ENCODE measurements at regions of chr10 and their contacts with region 1.

Region 1: DNA sequence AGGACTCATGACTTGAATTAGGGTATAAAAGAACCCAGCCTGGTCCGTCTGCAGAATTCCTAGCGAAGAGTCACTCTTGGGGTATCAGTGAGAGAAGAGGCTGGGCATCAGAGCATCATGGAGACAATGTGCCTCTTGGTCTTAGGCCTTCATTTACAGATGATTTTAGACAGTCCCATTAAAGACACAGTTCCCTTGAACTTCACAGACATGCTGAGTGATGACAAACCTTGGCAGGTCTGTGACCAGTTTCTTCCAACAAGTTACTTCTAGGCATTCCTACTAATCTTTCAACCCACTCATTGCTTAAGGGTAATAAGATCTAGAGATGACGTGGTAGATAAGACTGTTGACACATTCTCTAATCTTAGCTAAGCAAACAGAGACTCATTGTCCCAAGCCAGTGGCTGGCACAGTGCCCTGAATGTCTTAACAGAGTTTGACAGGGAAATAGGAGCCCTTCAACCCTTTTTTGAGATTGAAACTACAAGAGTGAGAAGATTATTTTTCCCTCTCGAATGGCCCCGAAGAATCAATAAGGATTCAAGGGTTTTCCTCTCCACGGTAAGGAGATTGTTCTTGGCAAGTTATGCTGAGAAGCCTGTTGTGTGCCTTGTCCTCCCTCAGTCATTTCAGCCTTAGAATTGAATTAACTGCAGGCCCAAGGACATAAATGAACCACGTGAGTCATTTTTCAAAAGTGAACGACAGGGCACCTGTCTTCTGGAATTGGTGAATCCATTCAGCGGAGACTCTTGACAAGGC is 281.1 kb downstream of the CCDC3 start:
- DNase-seq: peak; percentile 98
- H3K4me3 Mint-ChIP-seq: peak overlapping the region; percentile 43
- H3K27ac Mint-ChIP-seq: peak overlapping the region; percentile 79
- H3K4me1 Mint-ChIP-seq: peaks cover 26% of the 10 kb centered on the region
- H3K27me3 Mint-ChIP-seq: no peaks in the 10 kb centered on the region
- CTCF ChIP-seq: no peak

Region 2: GRCh38 chr10:12697764-12698163 is 22.6 kb before region 1 on chr10:
- CTCF ChIA-PET with region 1: no interaction called
- POLR2A ChIA-PET with region 1: no interaction called
- intact Hi-C with region 1: no loop called
- DNase-seq: no peak
- H3K4me3 Mint-ChIP-seq: no peak overlapping the region
- H3K27ac Mint-ChIP-seq: no peak overlapping the region
- H3K4me1 Mint-ChIP-seq: peaks cover 12% of the 10 kb centered on the region
- H3K27me3 Mint-ChIP-seq: no peaks in the 10 kb centered on the region
- CTCF ChIP-seq: no peak

Region 3: DNA sequence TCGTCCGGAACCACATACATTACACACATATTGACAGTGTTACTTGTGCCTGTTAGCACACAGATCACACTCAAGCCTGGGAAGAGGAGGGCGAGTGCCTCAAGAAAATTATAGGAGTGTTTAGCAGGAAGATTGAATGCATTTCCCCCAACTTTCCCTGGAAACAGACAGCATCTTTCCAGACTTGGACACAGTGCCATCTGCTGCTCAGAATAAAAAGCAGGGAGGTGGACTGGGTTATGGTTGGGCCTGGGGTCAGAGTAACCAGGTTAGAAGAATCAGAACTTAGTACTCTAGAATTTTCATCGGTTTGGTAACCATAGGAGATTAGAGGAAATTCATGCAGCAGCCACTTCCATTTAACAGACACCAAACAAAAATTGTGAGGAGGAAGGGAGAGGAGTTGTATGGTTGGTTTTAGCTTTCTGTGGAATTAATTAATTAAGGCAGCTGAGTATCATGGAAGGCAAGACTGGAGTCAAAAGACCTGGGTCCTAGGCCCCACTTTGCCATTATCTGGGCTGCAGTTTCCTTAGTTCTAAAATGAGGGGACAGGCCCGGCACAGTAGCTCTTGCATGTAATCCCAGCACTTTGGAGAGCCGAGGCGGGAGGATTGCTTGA is 336.2 kb after region 1 on chr10:
- CTCF ChIA-PET with region 1: interaction called, 10 read pairs
- POLR2A ChIA-PET with region 1: no interaction called
- intact Hi-C with region 1: no loop called
- DNase-seq: peak; percentile 41
- H3K4me3 Mint-ChIP-seq: no peak overlapping the region
- H3K27ac Mint-ChIP-seq: no peak overlapping the region
- H3K4me1 Mint-ChIP-seq: no peaks in the 10 kb centered on the region
- H3K27me3 Mint-ChIP-seq: peaks cover 4% of the 10 kb centered on the region
- CTCF ChIP-seq: peak; percentile 38